ENCODE measurements at regions of chr9 and their contacts with region 1.

Region 1: GRCh38 chr9:27800159-27800558 is 226.9 kb upstream of the C9orf72 start:
- DNase-seq: no peak
- H3K4me3 ChIP-seq: no peak overlapping the region
- H3K27ac ChIP-seq: no peak overlapping the region
- H3K4me1 ChIP-seq: no peaks in the 10 kb centered on the region
- H3K27me3 ChIP-seq: no peaks in the 10 kb centered on the region
- CTCF ChIP-seq: no peak

Region 2: GRCh38 chr9:27514551-27514950 is 285.6 kb before region 1 on chr9:
- intact Hi-C with region 1: no loop called
- DNase-seq: peak in 1 of 2 donors; percentile 25
- H3K4me3 ChIP-seq: no peak overlapping the region
- H3K27ac ChIP-seq: no peak overlapping the region
- H3K4me1 ChIP-seq: peaks cover 0 to 20% (median 5%) of the 10 kb centered on the region in 4 donors
- H3K27me3 ChIP-seq: no peaks in the 10 kb centered on the region
- CTCF ChIP-seq: no peak

Region 3: DNA sequence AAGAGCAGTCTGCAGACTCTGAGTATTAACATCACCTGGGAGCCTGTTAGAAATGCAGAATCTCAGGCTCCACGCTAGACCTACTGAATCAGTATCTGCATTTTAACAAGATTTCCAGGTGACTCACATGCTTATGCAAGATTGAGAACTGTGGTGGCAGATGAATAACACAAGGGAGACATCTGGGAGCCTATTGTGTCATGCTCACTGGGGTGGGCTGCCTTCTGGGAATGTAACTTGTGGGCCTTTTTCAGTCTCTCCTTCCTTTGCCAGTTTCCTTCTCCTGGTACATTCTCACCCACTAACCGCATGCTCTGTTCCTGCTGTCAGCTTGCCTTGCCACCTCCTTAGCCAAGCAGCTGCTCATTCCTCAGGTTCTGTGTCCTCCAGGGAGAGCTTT is 50.3 kb before region 1 on chr9:
- intact Hi-C with region 1: loop called (anchors 10 kb)
- DNase-seq: no peak
- H3K4me3 ChIP-seq: no peak overlapping the region
- H3K27ac ChIP-seq: no peak overlapping the region
- H3K4me1 ChIP-seq: no peaks in the 10 kb centered on the region
- H3K27me3 ChIP-seq: no peaks in the 10 kb centered on the region
- CTCF ChIP-seq: no peak

Measured in tibial artery (tissue), 4 donors.